ENCODE measurements at regions of chr19 and their contacts with region 1.

Region 1: GRCh38 chr19:22634450-22634827 is 315 bp downstream of the ZNF492 start:
- DNase-seq: no peak
- ATAC-seq: no peak
- H3K4me3 ChIP-seq: peak overlapping the region; percentile 53 to 62
- H3K4me3 Mint-ChIP-seq: peak overlapping the region; percentile 91
- H3K27ac ChIP-seq: peak overlapping the region in 1 of 2 experiments; percentile 30
- H3K27ac Mint-ChIP-seq: peak overlapping the region; percentile 79
- H3K4me1 ChIP-seq: no peaks in the 10 kb centered on the region
- H3K4me1 Mint-ChIP-seq: peaks cover 5% of the 10 kb centered on the region
- H3K27me3 ChIP-seq: no peaks in the 10 kb centered on the region
- H3K27me3 Mint-ChIP-seq: no peaks in the 10 kb centered on the region
- CTCF ChIP-seq: no peak

Region 2: GRCh38 chr19:23273590-23274413 is 639.4 kb after region 1 on chr19:
- CTCF ChIA-PET with region 1: no interaction called
- POLR2A ChIA-PET with region 1: no interaction called
- intact Hi-C with region 1: loop called in 1 of 2 experiments (anchors 10 kb)
- DNase-seq: peak; percentile 80 to 95 (median 92)
- ATAC-seq: peak; percentile 98
- H3K4me3 ChIP-seq: peak overlapping the region; percentile 80 to 95
- H3K4me3 Mint-ChIP-seq: peak overlapping the region; percentile 98
- H3K27ac ChIP-seq: peak overlapping the region; percentile 78 to 83
- H3K27ac Mint-ChIP-seq: peak overlapping the region; percentile 97
- H3K4me1 ChIP-seq: peaks cover 8% of the 10 kb centered on the region
- H3K4me1 Mint-ChIP-seq: peaks cover 35% of the 10 kb centered on the region
- H3K27me3 ChIP-seq: no peaks in the 10 kb centered on the region
- H3K27me3 Mint-ChIP-seq: no peaks in the 10 kb centered on the region
- CTCF ChIP-seq: no peak

Region 3: GRCh38 chr19:24033301-24033962 is 1399.0 kb after region 1 on chr19:
- CTCF ChIA-PET with region 1: no interaction called
- POLR2A ChIA-PET with region 1: no interaction called
- intact Hi-C with region 1: loop called in 1 of 2 experiments (anchors 5 kb)
- DNase-seq: peak; percentile 70 to 92 (median 84)
- ATAC-seq: peak; percentile 99
- H3K4me3 ChIP-seq: peak overlapping the region; percentile 99
- H3K4me3 Mint-ChIP-seq: peak overlapping the region; percentile 100
- H3K27ac ChIP-seq: peak overlapping the region; percentile 88 to 92
- H3K27ac Mint-ChIP-seq: peak overlapping the region; percentile 99
- H3K4me1 ChIP-seq: peaks cover 34% of the 10 kb centered on the region
- H3K4me1 Mint-ChIP-seq: peaks cover 48% of the 10 kb centered on the region
- H3K27me3 ChIP-seq: no peaks in the 10 kb centered on the region
- H3K27me3 Mint-ChIP-seq: no peaks in the 10 kb centered on the region
- CTCF ChIP-seq: no peak

Measured in CD8-positive, alpha-beta T cell (primary cell).